Heart left ventricle (tissue), 16 donors: ENCODE measurements at regions of chr7 and their contacts with region 1.

Region 1: GRCh38 chr7:786472-787255 is 45.6 kb upstream of the SUN1 start:
- DNase-seq: peak in 4 of 5 donors; percentile 65 to 77 (median 69)
- ATAC-seq: peak; percentile 53 to 82 (median 79)
- H3K4me3 ChIP-seq: no peak overlapping the region
- H3K27ac ChIP-seq: peak overlapping the region in 1 of 12 donors; percentile 2
- H3K4me1 ChIP-seq: peaks cover 0 to 7% (median under 1%) of the 10 kb centered on the region in 12 donors
- H3K27me3 ChIP-seq: no peaks in the 10 kb centered on the region
- CTCF ChIP-seq: peak; percentile 67 to 92 (median 77)
- POLR2A ChIP-seq: no peak

Region 2: GRCh38 chr7:801940-802381 is 15.3 kb after region 1 on chr7:
- intact Hi-C with region 1: loop called in 1 of 10 experiments (anchors 1 kb)
- DNase-seq: peak in 2 of 5 donors; percentile 53 to 64
- ATAC-seq: peak; percentile 39 to 62 (median 61)
- H3K4me3 ChIP-seq: peak overlapping the region in 4 of 12 donors; percentile 11 to 14 (median 12)
- H3K27ac ChIP-seq: peak overlapping the region in 9 of 12 donors; percentile 7 to 66 (median 33)
- H3K4me1 ChIP-seq: peaks cover 0 to 26% (median 12%) of the 10 kb centered on the region in 12 donors
- H3K27me3 ChIP-seq: no peaks in the 10 kb centered on the region
- CTCF ChIP-seq: no peak
- POLR2A ChIP-seq: no peak

Region 3: GRCh38 chr7:831596-832166 is 45.0 kb after region 1 on chr7:
- intact Hi-C with region 1: loop called in 6 of 10 experiments (anchors 2 to 10 kb)
- DNase-seq: no peak
- ATAC-seq: peak; percentile 66 to 83 (median 72)
- H3K4me3 ChIP-seq: peak overlapping the region in 11 of 12 donors; percentile 2 to 48 (median 36)
- H3K27ac ChIP-seq: peak overlapping the region; percentile 80 to 99 (median 94)
- H3K4me1 ChIP-seq: peaks cover 26 to 94% (median 67%) of the 10 kb centered on the region in 12 donors
- H3K27me3 ChIP-seq: no peaks in the 10 kb centered on the region
- CTCF ChIP-seq: no peak
- POLR2A ChIP-seq: no peak

Region 4: DNA sequence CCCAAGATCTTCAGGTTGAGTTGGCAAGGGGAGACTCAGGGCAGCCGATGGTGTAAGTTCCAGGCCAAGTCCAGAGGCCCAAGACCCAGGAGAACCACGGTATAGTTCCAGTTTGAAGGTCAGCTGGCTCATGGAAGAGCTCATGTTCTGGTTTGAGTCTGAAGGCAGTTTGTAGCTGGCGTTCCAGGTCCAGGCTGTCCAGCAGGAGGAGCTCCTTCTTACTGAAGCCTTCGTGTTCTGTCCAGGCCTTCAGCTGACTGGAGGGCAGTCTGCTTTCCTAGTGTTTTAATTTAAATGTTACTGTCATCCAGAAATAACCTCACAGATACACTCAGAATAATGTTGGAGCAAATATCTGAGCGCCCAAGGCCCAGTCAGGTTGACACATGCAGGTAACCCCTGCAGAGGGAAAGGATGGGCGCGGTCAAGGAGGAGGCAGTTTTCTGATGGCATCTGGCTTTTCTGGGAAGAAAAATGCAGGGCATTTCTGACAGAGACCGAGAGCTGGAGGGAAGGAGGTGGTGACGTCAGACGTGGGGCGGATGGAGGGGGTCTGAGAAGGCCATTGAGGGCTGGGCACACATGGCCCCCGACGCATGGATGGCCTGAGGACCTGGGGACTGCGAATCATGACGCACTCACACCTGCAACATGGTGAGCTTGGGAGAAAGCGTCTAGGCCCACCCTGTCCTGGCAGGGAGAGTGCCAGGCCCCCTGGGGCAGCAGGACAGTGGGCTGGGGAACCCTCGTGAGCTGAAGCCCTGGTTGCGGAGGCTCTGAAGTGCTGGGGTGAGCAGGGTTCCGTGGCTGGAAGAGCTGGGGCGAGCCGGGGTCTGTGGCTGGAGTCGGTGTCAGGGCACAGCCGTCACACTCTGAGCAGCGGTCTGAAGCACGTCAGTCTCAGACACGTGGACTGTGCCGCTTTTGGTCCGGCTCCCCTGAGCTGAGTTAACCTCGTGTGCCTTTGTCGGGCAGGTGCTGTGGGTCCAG is 50.0 kb after region 1 on chr7:
- intact Hi-C with region 1: loop called in 6 of 10 experiments (anchors 2 to 10 kb)
- DNase-seq: peak in 2 of 5 donors; percentile 52 to 68
- ATAC-seq: peak; percentile 50 to 75 (median 69)
- H3K4me3 ChIP-seq: no peak overlapping the region
- H3K27ac ChIP-seq: peak overlapping the region in 11 of 12 donors; percentile 52 to 97 (median 82)
- H3K4me1 ChIP-seq: peaks cover 17 to 74% (median 52%) of the 10 kb centered on the region in 12 donors
- H3K27me3 ChIP-seq: no peaks in the 10 kb centered on the region
- CTCF ChIP-seq: peak; percentile 22 to 65 (median 44)
- POLR2A ChIP-seq: no peak

Region 5: GRCh38 chr7:867672-868486 is 81.2 kb after region 1 on chr7:
- intact Hi-C with region 1: loop called in 8 of 10 experiments (anchors 1 to 5 kb)
- DNase-seq: peak; percentile 56 to 89 (median 72)
- ATAC-seq: peak; percentile 83 to 89 (median 84)
- H3K4me3 ChIP-seq: peak overlapping the region in 1 of 12 donors; percentile 4
- H3K27ac ChIP-seq: peak overlapping the region; percentile 33 to 88 (median 74)
- H3K4me1 ChIP-seq: peaks cover 0 to 41% (median 17%) of the 10 kb centered on the region in 12 donors
- H3K27me3 ChIP-seq: no peaks in the 10 kb centered on the region
- CTCF ChIP-seq: peak in 1 of 12 donors; percentile 22
- POLR2A ChIP-seq: no peak

Region 6: GRCh38 chr7:1081931-1082401 is 295.3 kb after region 1 on chr7:
- intact Hi-C with region 1: no loop called
- DNase-seq: no peak
- ATAC-seq: no peak
- H3K4me3 ChIP-seq: no peak overlapping the region
- H3K27ac ChIP-seq: no peak overlapping the region
- H3K4me1 ChIP-seq: peaks cover 0 to 26% (median 13%) of the 10 kb centered on the region in 12 donors
- H3K27me3 ChIP-seq: no peaks in the 10 kb centered on the region
- CTCF ChIP-seq: no peak
- POLR2A ChIP-seq: no peak